Activated CD4-positive, alpha-beta T cell treated with anti-CD3 and anti-CD28 coated beads for 36 hours (primary cell): ENCODE measurements at regions of chrX and their contacts with region 1.

Region 1: GRCh38 chrX:30635630-30636029 is 17.6 kb upstream of the GK start:
- DNase-seq: no peak
- ATAC-seq: peak; percentile 39
- H3K4me3 Mint-ChIP-seq: no peak overlapping the region
- H3K27ac Mint-ChIP-seq: no peak overlapping the region
- H3K4me1 Mint-ChIP-seq: peaks cover 3% of the 10 kb centered on the region
- H3K27me3 Mint-ChIP-seq: no peaks in the 10 kb centered on the region

Region 2: GRCh38 chrX:30618156-30618765 is 17.4 kb before region 1 on chrX:
- CTCF ChIA-PET with region 1: no interaction called
- POLR2A ChIA-PET with region 1: no interaction called
- intact Hi-C with region 1: no loop called
- DNase-seq: no peak
- ATAC-seq: no peak
- H3K4me3 Mint-ChIP-seq: no peak overlapping the region
- H3K27ac Mint-ChIP-seq: no peak overlapping the region
- H3K4me1 Mint-ChIP-seq: peaks cover 6% of the 10 kb centered on the region
- H3K27me3 Mint-ChIP-seq: no peaks in the 10 kb centered on the region

Region 3: GRCh38 chrX:30673127-30673796 is 37.6 kb after region 1 on chrX:
- CTCF ChIA-PET with region 1: interaction called, 4 read pairs
- POLR2A ChIA-PET with region 1: no interaction called
- intact Hi-C with region 1: loop called in 1 of 2 experiments (anchors 5 kb)
- DNase-seq: no peak
- ATAC-seq: no peak
- H3K4me3 Mint-ChIP-seq: no peak overlapping the region
- H3K27ac Mint-ChIP-seq: no peak overlapping the region
- H3K4me1 Mint-ChIP-seq: no peaks in the 10 kb centered on the region
- H3K27me3 Mint-ChIP-seq: no peaks in the 10 kb centered on the region

Region 4: GRCh38 chrX:30822068-30822681 is 186.5 kb after region 1 on chrX:
- CTCF ChIA-PET with region 1: no interaction called
- POLR2A ChIA-PET with region 1: no interaction called
- intact Hi-C with region 1: loop called in 1 of 2 experiments (anchors 5 kb)
- DNase-seq: no peak
- ATAC-seq: no peak
- H3K4me3 Mint-ChIP-seq: no peak overlapping the region
- H3K27ac Mint-ChIP-seq: no peak overlapping the region
- H3K4me1 Mint-ChIP-seq: peaks cover 18% of the 10 kb centered on the region
- H3K27me3 Mint-ChIP-seq: no peaks in the 10 kb centered on the region